Activated B cell treated with CpG ODN at 0.5 μM for 24 hours (primary cell): ENCODE measurements at regions of chrX and their contacts with region 1.

Region 1: DNA sequence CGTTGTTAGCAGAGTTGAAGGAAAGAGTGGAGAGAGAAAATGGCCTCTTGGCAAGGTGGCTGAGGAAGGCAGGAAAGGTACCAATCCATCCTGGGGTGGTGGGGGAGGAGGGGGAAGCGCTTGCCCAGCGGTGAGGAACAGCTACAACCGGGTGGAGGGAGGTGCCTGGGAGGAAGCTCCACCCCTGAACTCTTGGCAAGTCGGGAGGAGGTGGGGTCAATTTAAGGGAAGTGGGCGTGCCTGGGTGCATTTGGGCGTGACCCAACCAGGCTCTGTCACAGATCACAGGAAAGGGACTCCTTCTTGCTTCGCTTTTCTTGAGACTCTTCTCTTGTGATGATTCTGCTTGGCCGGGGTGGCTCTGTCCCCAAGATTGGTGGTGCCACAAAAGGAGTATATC is 41.7 kb downstream of the BCORL1 start:
- DNase-seq: peak; percentile 64
- ATAC-seq: peak; percentile 100
- H3K4me3 Mint-ChIP-seq: peak overlapping the region; percentile 58
- H3K27ac Mint-ChIP-seq: peak overlapping the region; percentile 78
- H3K4me1 Mint-ChIP-seq: peaks cover 15% of the 10 kb centered on the region
- H3K27me3 Mint-ChIP-seq: no peaks in the 10 kb centered on the region
- CTCF ChIP-seq: no peak

Region 2: DNA sequence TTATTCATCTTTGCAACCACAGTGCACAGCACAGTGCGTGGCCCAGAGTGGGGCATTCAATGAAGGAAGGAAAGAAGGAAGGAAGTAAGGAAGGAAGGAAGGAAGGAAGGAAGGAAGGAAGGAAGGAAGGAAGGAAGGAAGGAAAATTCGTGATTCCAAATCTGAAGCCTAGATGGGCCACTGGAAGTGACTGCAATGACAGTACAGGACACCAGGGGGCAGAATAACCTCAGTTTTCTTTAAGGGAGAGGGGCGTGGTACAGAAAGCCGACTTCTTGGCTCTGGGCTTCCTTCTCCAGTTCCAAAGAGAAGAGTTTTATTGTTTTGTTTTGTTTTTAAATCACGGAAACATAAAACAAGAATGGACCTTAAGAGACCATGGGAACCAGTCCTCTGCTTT is 417.2 kb before region 1 on chrX:
- CTCF ChIA-PET with region 1: interaction called, 6 read pairs
- POLR2A ChIA-PET with region 1: no interaction called
- intact Hi-C with region 1: loop called (anchors 1 kb)
- DNase-seq: no peak
- ATAC-seq: peak; percentile 61
- H3K4me3 Mint-ChIP-seq: no peak overlapping the region
- H3K27ac Mint-ChIP-seq: no peak overlapping the region
- H3K4me1 Mint-ChIP-seq: peaks cover 19% of the 10 kb centered on the region
- H3K27me3 Mint-ChIP-seq: no peaks in the 10 kb centered on the region
- CTCF ChIP-seq: no peak

Region 3: DNA sequence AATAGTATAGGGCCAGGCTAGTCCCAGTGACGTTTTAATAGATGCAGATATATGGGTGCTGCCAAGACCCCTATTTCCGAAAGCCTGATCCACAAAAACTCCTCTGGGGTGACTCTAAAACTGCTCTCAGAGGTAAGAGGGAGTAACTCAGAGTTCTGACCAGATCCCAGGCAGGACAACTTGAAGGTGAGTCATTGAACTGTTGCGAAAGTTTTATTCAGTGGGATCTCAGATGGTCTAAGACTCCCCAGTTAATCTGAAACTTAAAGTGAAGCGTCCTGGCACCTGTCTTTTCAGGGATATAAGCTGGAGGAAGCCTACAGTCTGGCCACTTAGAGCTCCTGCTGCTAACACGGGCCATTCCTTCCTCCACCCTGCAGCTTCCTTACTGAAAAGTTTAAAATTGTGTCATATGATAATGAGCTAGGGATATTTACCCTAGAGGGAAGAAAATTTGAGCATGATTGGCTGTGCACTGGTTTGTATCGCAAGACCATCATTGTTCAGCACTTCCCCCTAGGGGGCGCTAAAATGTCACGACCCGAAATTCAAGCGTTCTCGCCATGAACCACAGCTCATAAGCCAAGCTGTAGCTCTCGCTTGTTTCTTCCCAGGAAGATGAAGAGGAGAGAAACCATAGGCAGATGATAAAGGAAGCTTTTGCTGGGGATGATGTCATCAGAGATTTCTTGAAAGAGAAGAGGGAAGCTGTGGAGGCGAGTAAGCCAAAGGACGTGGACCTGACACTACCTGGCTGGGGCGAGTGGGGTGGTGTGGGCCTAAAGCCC is 98.6 kb before region 1 on chrX:
- CTCF ChIA-PET with region 1: interaction called, 137 read pairs
- POLR2A ChIA-PET with region 1: no interaction called
- intact Hi-C with region 1: loop called (anchors 1 kb)
- DNase-seq: peak; percentile 30
- ATAC-seq: peak; percentile 84
- H3K4me3 Mint-ChIP-seq: no peak overlapping the region
- H3K27ac Mint-ChIP-seq: no peak overlapping the region
- H3K4me1 Mint-ChIP-seq: peaks cover 4% of the 10 kb centered on the region
- H3K27me3 Mint-ChIP-seq: no peaks in the 10 kb centered on the region
- CTCF ChIP-seq: no peak

Region 4: DNA sequence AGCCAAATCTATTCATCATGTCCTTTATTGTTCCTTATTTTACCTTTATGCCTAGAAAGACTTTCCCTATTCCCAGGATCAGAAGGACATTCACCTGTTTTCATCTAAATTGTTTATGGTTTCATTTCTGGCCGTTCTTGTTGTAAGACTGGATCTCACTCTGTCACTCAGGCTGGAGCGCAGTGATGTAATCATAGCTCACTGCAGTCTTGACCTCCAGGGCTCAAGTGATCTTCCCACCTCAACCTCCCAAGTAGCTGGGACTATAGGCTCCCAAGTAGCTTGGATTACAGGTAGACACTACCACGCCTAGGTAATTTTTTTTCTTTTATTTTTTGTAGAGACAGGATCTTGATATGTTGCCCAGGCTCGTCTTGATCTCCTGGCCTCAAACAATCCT is 79.7 kb before region 1 on chrX:
- CTCF ChIA-PET with region 1: no interaction called
- POLR2A ChIA-PET with region 1: interaction called, 11 read pairs
- intact Hi-C with region 1: no loop called
- DNase-seq: no peak
- ATAC-seq: no peak
- H3K4me3 Mint-ChIP-seq: no peak overlapping the region
- H3K27ac Mint-ChIP-seq: no peak overlapping the region
- H3K4me1 Mint-ChIP-seq: no peaks in the 10 kb centered on the region
- H3K27me3 Mint-ChIP-seq: no peaks in the 10 kb centered on the region
- CTCF ChIP-seq: no peak

Region 5: GRCh38 chrX:129982274-129983251 is 41.6 kb before region 1 on chrX and contains the start of gene BCORL1:
- CTCF ChIA-PET with region 1: no interaction called
- POLR2A ChIA-PET with region 1: no interaction called
- intact Hi-C with region 1: loop called (anchors 1 kb)
- DNase-seq: peak; percentile 70
- ATAC-seq: peak; percentile 89
- H3K4me3 Mint-ChIP-seq: no peak within 1 kb of the TSS
- H3K27ac Mint-ChIP-seq: peak within 1 kb of the TSS; percentile 68
- H3K4me1 Mint-ChIP-seq: peaks cover 18% of the 10 kb centered on the region
- H3K27me3 Mint-ChIP-seq: no peaks in the 10 kb centered on the region
- CTCF ChIP-seq: no peak
- total RNA-seq, gene BCORL1: 8.0 and 8.2 TPM in 2 replicates

Region 6: GRCh38 chrX:130053236-130053635 is 29.1 kb after region 1 on chrX:
- CTCF ChIA-PET with region 1: no interaction called
- POLR2A ChIA-PET with region 1: no interaction called
- intact Hi-C with region 1: no loop called
- DNase-seq: no peak
- ATAC-seq: no peak
- H3K4me3 Mint-ChIP-seq: no peak overlapping the region
- H3K27ac Mint-ChIP-seq: no peak overlapping the region
- H3K4me1 Mint-ChIP-seq: no peaks in the 10 kb centered on the region
- H3K27me3 Mint-ChIP-seq: no peaks in the 10 kb centered on the region
- CTCF ChIP-seq: no peak